ENCODE measurements at regions of chr19 and their contacts with region 1.

Region 1: DNA sequence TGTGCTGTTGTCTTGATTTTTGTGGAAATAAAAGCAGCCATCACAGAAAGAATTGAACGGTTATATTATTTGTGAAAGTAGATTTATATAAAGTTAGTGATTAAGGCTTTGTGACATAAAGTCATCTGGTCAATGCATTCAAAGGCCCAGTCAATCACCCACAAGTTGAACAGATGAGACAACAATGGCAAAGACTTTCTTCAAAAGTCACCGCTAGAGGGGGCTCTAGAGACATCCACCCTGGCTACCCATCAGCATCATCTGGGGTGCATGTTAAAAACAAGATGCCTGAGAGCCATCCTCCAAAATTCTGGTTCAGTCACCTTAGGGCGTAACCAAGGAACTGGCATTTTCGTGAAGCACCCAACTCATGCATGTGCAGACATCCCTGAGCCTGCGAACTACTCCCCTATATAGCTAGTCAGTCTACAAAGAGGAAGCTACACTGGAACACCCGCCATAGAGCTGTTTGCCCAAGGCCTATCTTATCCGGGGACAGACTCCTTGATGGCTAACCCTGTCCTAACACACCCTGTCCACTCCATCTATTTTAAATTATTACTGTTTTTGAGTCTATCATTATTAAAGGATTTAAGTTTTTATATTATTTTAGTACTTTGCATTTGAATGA is 970.5 kb downstream of the UQCRFS1 start:
- H3K4me3 Mint-ChIP-seq: no peak overlapping the region
- H3K27ac Mint-ChIP-seq: no peak overlapping the region
- H3K4me1 Mint-ChIP-seq: no peaks in the 10 kb centered on the region
- H3K27me3 Mint-ChIP-seq: no peaks in the 10 kb centered on the region

Region 2: GRCh38 chr19:28710278-28710677 is 467.9 kb after region 1 on chr19:
- intact Hi-C with region 1: loop called (anchors 2 kb)
- H3K4me3 Mint-ChIP-seq: no peak overlapping the region
- H3K27ac Mint-ChIP-seq: no peak overlapping the region
- H3K4me1 Mint-ChIP-seq: no peaks in the 10 kb centered on the region
- H3K27me3 Mint-ChIP-seq: peaks cover 1% of the 10 kb centered on the region